BJ (cell line): ENCODE measurements at regions of chr1 and their contacts with region 1.

Region 1: DNA sequence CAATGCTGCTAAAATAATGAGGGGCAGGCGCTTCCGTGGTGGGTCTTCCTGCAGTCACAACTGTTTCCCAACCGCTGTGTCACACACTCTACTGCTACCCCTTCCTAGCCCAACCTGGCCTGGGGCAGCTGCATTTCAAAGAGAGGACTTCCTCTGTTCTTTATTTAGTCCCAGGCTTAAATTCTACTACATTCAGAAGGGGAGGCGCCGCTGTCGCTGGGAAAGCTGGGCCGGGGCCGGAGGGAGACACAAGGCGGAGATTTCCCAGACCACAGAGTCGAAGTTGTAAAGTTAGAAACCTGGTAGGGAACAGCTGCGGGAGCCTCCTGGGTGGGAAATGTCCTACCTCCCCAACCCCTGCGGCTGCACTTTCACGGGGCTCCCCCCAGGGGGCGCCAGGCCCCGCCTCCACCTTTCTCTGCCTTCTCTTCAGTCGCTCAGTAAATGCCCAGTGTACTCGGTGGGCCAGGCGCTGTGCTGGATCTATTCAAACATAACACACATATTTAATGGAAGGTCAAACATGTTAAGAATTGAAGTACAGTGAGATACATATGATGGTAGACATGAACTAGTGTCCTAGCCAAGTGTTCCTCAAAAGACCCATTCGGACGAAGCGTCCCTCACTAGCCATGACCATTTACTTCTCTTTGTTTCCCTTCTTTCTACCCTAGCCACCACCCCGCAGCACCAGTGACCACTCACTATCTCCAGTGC is 23.1 kb downstream of the DYRK3 start:
- DNase-seq: no peak
- H3K4me3 ChIP-seq: no peak overlapping the region
- H3K27me3 ChIP-seq: peaks cover 7% of the 10 kb centered on the region
- CTCF ChIP-seq: peak; percentile 83

Region 2: DNA sequence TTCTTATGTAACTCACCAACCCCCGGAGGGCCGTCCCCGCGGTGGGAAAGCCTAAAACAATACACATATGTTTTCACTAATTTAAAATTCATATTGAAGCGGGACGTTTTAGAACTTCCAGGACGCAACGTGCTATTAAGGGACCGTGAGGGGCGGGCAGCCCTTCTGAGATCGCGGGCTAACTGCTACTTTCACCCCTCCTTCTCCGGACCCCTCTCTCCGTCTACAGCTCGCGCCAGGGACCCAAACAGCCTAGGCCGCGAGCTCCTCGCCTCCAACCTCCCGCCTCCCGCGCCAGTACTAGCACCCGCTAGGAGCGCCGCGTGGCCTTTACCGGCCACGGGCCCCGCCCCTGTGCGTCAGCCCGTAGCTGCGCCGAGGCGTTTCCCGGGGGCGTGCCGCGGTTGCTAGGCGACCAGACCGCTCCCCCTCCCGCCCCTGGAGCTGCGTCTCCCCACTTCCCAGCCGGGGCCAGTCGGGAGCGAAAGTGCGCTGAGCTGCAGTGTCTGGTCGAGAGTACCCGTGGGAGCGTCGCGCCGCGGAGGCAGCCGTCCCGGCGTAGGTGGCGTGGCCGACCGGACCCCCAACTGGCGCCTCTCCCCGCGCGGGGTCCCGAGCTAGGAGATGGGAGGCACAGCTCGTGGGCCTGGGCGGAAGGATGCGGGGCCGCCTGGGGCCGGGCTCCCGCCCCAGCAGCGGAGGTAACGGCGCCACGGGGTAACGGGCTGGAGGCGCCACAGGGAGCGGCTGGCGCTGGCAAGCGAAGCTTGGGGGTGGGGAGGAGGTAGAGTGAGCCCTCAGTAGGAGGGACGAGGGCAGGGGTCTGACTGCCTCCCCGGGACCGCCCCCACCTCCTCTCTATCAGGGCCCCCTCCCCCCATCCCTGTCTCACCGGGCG is 23.1 kb before region 1 on chr1 and contains the start of gene DYRK3:
- CTCF ChIA-PET with region 1: interaction called, 130 read pairs
- POLR2A ChIA-PET with region 1: no interaction called
- DNase-seq: peak; percentile 46
- H3K4me3 ChIP-seq: peak within 1 kb of the TSS; percentile 83
- H3K27me3 ChIP-seq: no peaks in the 10 kb centered on the region
- CTCF ChIP-seq: 0 out of 2 replicates have a peak, but pooled peaks have one; percentile 13
- polyA plus RNA-seq, gene DYRK3: 7.4 and 10.8 TPM in 2 replicates

Region 3: DNA sequence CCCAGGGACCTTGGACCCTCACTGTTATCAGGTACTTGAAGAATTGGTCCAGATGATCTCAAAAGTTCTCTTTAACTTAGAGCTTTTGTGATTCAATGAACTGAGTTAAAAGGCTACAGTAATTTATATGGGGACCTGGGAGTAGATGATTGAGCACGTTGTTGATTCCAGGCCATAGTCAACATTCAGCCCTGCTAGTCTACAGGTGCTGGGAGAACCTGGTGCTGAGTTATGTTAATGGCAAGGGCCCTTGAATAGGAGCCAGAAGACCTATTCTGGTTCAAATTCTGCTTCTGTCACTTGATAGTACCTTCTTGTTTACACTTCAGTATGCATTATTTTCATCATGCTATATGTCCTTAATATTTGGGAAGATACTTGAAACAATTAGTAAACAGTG is 11.9 kb before region 1 on chr1:
- CTCF ChIA-PET with region 1: interaction called, 44 read pairs
- POLR2A ChIA-PET with region 1: no interaction called
- DNase-seq: no peak
- H3K4me3 ChIP-seq: no peak overlapping the region
- H3K27me3 ChIP-seq: no peaks in the 10 kb centered on the region
- CTCF ChIP-seq: no peak